ENCODE measurements at regions of chr1 and their contacts with region 1.

Region 1: DNA sequence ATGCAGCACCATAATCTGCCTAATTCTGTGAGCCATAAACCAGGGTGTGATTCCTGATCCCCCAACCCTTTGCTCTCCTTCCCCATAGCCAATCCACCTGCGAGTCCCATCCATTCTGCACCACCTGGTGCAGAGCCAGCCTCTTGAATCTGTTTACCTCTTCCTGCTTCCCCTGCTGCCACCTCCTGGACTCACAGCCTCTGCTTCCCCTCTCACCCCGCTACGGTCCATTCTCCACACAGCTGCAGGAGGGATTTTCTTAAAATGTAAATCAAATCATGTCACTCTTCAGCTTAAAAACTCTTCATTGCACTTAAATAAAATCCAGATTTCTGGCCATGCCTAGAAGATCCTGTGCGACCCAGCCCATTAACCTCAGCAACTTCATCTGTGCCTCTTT is 186.7 kb downstream of the FOXD2 start:
- DNase-seq: peak; percentile 52
- H3K4me3 ChIP-seq: no peak overlapping the region
- H3K27ac ChIP-seq: no peak overlapping the region
- H3K4me1 ChIP-seq: no peaks in the 10 kb centered on the region
- H3K27me3 ChIP-seq: no peaks in the 10 kb centered on the region
- CTCF ChIP-seq: peak in 4 of 5 experiments; percentile 27 to 92 (median 52)
- EP300 ChIP-seq: no peak
- POLR2A ChIP-seq: no peak

Region 2: GRCh38 chr1:47527658-47528255 is 96.8 kb before region 1 on chr1:
- in situ Hi-C with region 1: loop called in 1 of 4 experiments (anchors 10 kb)
- intact Hi-C with region 1: no loop called
- DNase-seq: peak; percentile 73
- H3K4me3 ChIP-seq: no peak overlapping the region
- H3K27ac ChIP-seq: no peak overlapping the region
- H3K4me1 ChIP-seq: peaks cover 0 to 1% (median under 1%) of the 10 kb centered on the region in 4 donors
- H3K27me3 ChIP-seq: no peaks in the 10 kb centered on the region
- CTCF ChIP-seq: peak; percentile 42 to 72 (median 58)
- EP300 ChIP-seq: no peak
- POLR2A ChIP-seq: no peak

Measured in transverse colon (tissue), 4 donors.